ENCODE measurements at regions of chr22 and their contacts with region 1.

Region 1: DNA sequence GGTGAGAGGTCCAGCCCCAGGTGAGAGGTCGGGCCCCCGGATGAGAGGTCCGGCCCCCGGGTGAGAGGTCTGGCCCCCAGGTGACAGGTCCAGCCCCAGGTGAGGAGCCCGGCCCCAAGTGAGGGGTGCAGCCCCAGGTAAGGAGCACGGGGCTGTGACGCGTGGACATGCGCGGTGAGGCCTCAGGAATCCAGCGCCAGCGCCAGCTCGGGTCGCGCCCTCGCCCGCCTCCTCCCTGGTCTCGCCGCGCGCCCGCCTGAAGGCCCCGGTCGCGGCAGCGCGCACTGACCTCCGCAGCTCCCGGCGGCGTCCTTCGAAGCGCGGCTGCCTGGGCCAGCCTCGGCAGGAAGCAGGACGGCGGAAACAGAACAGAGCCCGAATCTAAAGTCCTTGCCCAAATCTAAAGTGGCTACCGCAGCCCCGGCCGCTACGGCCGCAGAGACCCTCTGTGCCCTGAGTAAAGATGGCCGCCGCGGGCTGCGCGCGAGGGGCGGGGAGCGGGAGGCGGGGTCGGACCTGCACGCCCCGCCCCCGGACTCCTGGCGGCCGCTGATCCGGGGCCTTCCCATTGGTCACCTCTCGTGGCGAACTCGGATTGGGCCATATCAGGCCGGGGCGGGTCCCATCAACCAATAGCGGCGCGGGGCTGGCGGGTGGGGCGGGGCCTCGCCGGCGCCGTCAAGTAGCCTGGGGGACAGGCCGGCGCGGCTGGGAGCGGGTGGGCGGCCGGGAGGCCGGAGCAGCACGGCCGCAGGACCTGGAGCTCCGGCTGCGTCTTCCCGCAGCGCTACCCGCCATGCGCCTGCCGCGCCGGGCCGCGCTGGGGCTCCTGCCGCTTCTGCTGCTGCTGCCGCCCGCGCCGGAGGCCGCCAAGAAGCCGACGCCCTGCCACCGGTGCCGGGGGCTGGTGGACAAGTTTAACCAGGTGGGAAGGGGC is at the starts of genes ALG12 and CRELD2:
- DNase-seq: peak; percentile 97 to 98
- ATAC-seq: peak; percentile 95 to 97
- H3K4me3 ChIP-seq: peak within 1 kb of the TSS; percentile 71 to 89 (median 76)
- H3K27ac ChIP-seq: peak within 1 kb of the TSS; percentile 83 to 98 (median 95)
- H3K4me1 ChIP-seq: peaks cover 13 to 19% of the 10 kb centered on the region in 2 donors
- H3K27me3 ChIP-seq: no peaks in the 10 kb centered on the region
- CTCF ChIP-seq: peak in 1 of 5 experiments; percentile 21
- POLR2A ChIP-seq: peak; percentile 82 to 91
- total RNA-seq, gene ALG12: 6.4 to 9.6 (median 8.2) TPM
- total RNA-seq, gene CRELD2: 8.9 to 15.0 (median 13.0) TPM

Region 2: GRCh38 chr22:49789289-49790141 is 128.7 kb before region 1 on chr22:
- in situ Hi-C with region 1: no loop called
- intact Hi-C with region 1: loop called (anchors 5 kb)
- DNase-seq: peak in 1 of 2 donors; percentile 50
- ATAC-seq: no peak
- H3K4me3 ChIP-seq: peak overlapping the region in 3 of 4 donors; percentile 3 to 24 (median 21)
- H3K27ac ChIP-seq: peak overlapping the region; percentile 69 to 83 (median 79)
- H3K4me1 ChIP-seq: peaks cover 76 to 83% of the 10 kb centered on the region in 2 donors
- H3K27me3 ChIP-seq: no peaks in the 10 kb centered on the region
- CTCF ChIP-seq: no peak
- POLR2A ChIP-seq: no peak

Region 3: GRCh38 chr22:49852898-49853894 is 65.0 kb before region 1 on chr22 and contains the start of gene ZBED4:
- in situ Hi-C with region 1: loop called in 1 of 4 experiments (anchors 10 kb)
- intact Hi-C with region 1: loop called (anchors 2 kb)
- DNase-seq: peak; percentile 91 to 96
- ATAC-seq: peak; percentile 88 to 90
- H3K4me3 ChIP-seq: peak within 1 kb of the TSS; percentile 66 to 82 (median 73)
- H3K27ac ChIP-seq: peak within 1 kb of the TSS; percentile 83 to 92 (median 86)
- H3K4me1 ChIP-seq: peaks cover 25 to 35% of the 10 kb centered on the region in 2 donors
- H3K27me3 ChIP-seq: peaks cover 26 to 27% (median 26%) of the 10 kb centered on the region in 3 donors
- CTCF ChIP-seq: no peak
- POLR2A ChIP-seq: peak; percentile 74 to 82
- total RNA-seq, gene ZBED4: 6.7 to 8.4 (median 7.5) TPM

Region 4: GRCh38 chr22:49960159-49961004 is 42.1 kb after region 1 on chr22 and contains the start of gene PIM3:
- in situ Hi-C with region 1: no loop called
- intact Hi-C with region 1: loop called (anchors 1 kb)
- DNase-seq: peak; percentile 93 to 97
- ATAC-seq: peak; percentile 56 to 64
- H3K4me3 ChIP-seq: peak within 1 kb of the TSS; percentile 83 to 98 (median 88)
- H3K27ac ChIP-seq: peak within 1 kb of the TSS; percentile 90 to 99 (median 97)
- H3K4me1 ChIP-seq: peaks cover 35 to 43% of the 10 kb centered on the region in 2 donors
- H3K27me3 ChIP-seq: no peaks in the 10 kb centered on the region
- CTCF ChIP-seq: peak in 1 of 5 experiments; percentile 14
- POLR2A ChIP-seq: peak; percentile 94 to 96
- total RNA-seq, gene PIM3: 165 to 327 (median 188) TPM